Adrenal gland (tissue), 19 donors: ENCODE measurements at regions of chr3 and their contacts with region 1.

Region 1: DNA sequence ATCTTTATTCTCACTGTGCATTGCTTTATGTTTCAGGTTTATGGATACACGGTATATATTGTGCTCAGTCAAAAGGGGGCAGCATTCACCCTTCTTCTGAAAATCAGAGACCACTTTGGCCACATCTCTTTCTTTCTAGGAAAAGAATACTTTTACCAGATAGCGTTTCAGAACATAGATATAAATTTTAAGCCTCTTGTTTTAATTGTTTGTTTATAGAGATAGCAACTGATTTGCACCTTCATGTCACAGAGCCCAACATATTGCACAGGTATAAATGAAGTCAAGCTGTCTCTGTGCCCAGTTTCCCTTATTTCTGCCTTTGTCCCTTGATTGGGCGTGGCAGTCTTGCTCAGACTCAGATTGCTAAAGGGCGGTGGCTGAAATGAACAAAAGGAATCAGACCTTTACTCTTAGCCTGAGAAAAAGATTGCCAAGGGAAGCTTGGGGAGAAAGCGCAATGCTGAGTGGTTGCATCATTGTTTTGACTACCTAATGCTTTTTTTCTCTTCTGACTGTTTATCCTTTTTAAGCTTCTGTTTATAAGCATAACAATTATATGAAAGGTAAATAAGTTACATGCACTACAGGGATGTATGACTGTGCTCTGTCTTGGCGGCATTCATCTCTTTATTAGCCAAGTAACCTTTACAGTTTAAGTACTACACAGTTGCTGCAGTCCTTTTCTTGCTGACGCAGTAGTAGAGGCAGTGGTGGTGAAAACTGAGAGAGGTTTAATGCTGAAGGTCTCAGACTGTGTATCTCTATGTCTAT is 70.8 kb upstream of the ZBTB20 start:
- DNase-seq: peak in 5 of 7 donors; percentile 27 to 40 (median 35)
- H3K4me3 ChIP-seq: no peak overlapping the region
- H3K27ac ChIP-seq: no peak overlapping the region
- H3K4me1 ChIP-seq: peaks cover 0 to 6% of the 10 kb centered on the region in 2 donors
- H3K27me3 ChIP-seq: no peaks in the 10 kb centered on the region
- CTCF ChIP-seq: peak; percentile 60 to 80 (median 74)
- POLR2A ChIP-seq: no peak

Region 2: DNA sequence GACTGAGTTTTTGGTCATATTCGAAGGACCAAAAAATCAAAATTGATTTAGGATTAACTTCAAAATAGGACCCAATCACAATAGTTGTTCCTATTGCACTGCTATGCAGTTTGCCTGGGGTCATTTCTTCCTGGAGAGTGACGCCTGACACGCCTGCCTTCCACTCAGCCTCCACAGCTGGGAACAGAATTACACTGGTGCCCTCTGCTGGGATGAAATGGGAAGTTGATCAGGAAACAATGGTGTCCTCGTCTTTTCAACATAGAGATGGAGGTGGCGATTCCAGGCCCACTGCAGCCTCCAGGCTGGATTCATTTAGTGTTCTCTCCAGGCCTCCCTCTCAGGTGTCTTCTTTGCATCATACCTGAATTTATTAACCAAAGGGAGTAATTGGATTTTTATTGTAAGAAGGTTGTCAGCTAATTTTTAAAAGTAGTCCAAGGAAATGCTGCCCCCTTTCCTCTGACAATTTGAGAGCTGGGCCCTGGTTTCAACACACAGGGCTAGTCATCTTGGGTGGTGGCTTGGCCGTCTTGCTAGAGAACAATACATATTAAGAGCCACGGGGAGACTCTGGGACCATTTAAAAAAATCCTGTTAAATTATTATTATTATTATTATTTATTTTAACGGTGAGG is 475.1 kb after region 1 on chr3:
- intact Hi-C with region 1: loop called (anchors 5 kb)
- DNase-seq: peak; percentile 70 to 94 (median 81)
- H3K4me3 ChIP-seq: no peak overlapping the region
- H3K27ac ChIP-seq: peak overlapping the region in 1 of 5 donors; percentile 41
- H3K4me1 ChIP-seq: no peaks in the 10 kb centered on the region
- H3K27me3 ChIP-seq: no peaks in the 10 kb centered on the region
- CTCF ChIP-seq: peak; percentile 61 to 91 (median 86)
- POLR2A ChIP-seq: no peak

Region 3: DNA sequence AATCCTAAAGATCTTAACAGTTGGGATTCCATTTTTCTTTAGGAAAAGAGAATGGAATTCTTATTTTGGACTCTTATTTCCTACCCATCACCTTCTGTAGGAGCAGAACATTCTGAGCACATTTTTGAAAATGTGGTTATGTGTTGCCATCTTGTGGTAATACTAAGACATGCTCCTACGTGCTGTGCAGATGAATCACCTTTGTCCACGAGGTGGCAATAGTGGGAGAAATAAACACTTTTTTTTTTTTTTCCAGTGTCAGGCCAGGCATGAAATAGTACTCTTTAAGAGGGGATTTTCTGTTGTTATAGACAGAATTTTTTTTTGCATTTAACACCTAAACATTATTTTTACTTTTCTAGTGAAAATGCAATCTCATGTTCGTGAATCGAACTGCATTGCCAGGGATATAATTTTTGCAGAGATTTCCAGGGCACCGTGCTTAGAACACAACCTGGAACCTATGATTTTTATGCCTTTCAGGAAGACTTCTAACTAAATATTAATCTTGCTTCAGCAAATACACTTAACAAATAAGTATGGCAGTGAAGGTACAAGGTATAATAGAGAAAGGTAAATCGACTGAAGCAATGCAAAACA is 602.0 kb after region 1 on chr3:
- intact Hi-C with region 1: loop called in 1 of 2 experiments (anchors 10 kb)
- DNase-seq: peak; percentile 66 to 92 (median 69)
- H3K4me3 ChIP-seq: no peak overlapping the region
- H3K27ac ChIP-seq: no peak overlapping the region
- H3K4me1 ChIP-seq: no peaks in the 10 kb centered on the region
- H3K27me3 ChIP-seq: no peaks in the 10 kb centered on the region
- CTCF ChIP-seq: peak; percentile 79 to 98 (median 93)
- POLR2A ChIP-seq: peak in 1 of 2 donors; percentile 6